ENCODE measurements at regions of chr4 and their contacts with region 1.

Region 1: DNA sequence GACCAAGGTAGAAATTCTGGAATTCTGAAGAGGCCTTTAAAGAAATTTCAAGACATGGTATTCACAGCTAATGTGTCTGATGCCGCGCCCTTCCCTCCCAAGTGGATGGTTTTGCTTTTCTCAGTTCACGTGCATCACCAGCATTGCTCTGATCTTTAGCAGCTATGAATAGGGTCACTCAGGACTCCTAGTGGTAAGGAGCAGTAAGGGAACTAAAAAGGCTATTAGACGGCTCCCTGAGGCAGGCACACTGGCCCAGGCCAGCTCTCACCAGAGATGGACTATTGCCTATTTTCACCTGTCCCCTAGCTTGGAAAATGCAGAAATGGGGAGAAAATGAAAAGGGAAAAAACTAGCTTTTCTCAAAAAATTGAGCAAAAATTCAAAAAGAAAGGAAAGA is 447.5 kb upstream of the RASGEF1B start:
- DNase-seq: peak; percentile 21
- ATAC-seq: peak; percentile 99
- H3K4me3 ChIP-seq: no peak overlapping the region
- H3K27ac ChIP-seq: no peak overlapping the region
- H3K4me1 ChIP-seq: no peaks in the 10 kb centered on the region
- H3K27me3 ChIP-seq: no peaks in the 10 kb centered on the region
- CTCF ChIP-seq: peak; percentile 29; the same call in 1 of the 2 replicates
- EP300 ChIP-seq: no peak
- POLR2A ChIP-seq: no peak
- RAD21 ChIP-seq: no peak

Region 2: GRCh38 chr4:81881855-81882621 is 37.2 kb before region 1 on chr4:
- CTCF ChIA-PET with region 1: no interaction called
- POLR2A ChIA-PET with region 1: no interaction called
- in situ Hi-C with region 1: no loop called
- intact Hi-C with region 1: no loop called
- DNase-seq: no peak
- ATAC-seq: no peak
- H3K4me3 ChIP-seq: no peak overlapping the region
- H3K27ac ChIP-seq: no peak overlapping the region
- H3K4me1 ChIP-seq: no peaks in the 10 kb centered on the region
- H3K27me3 ChIP-seq: no peaks in the 10 kb centered on the region
- CTCF ChIP-seq: no peak
- EP300 ChIP-seq: no peak
- POLR2A ChIP-seq: no peak
- RAD21 ChIP-seq: no peak

Region 3: GRCh38 chr4:82044142-82044993 is 125.1 kb after region 1 on chr4:
- CTCF ChIA-PET with region 1: no interaction called
- POLR2A ChIA-PET with region 1: no interaction called
- in situ Hi-C with region 1: no loop called
- intact Hi-C with region 1: loop called (anchors 5 kb)
- DNase-seq: no peak
- ATAC-seq: peak; percentile 59
- H3K4me3 ChIP-seq: peak overlapping the region in 1 of 3 experiments; percentile 23; a peak in 1 of 6 replicates
- H3K27ac ChIP-seq: no peak overlapping the region
- H3K4me1 ChIP-seq: peaks cover 12% of the 10 kb centered on the region
- H3K27me3 ChIP-seq: peaks cover 4 to 39% of the 10 kb centered on the region in 2 experiments; a peak in 3 of 5 replicates
- CTCF ChIP-seq: no peak
- EP300 ChIP-seq: no peak
- POLR2A ChIP-seq: no peak
- RAD21 ChIP-seq: no peak